ENCODE measurements at regions of chr3 and their contacts with region 1.

Region 1: GRCh38 chr3:152268555-152269425 is at the start of gene MBNL1:
- DNase-seq: peak; percentile 91
- H3K4me3 ChIP-seq: peak within 1 kb of the TSS; percentile 78 to 86 (median 82)
- H3K27ac ChIP-seq: peak within 1 kb of the TSS; percentile 98 to 99 (median 99)
- H3K4me1 ChIP-seq: peaks cover 0 to 58% (median 44%) of the 10 kb centered on the region in 4 donors
- H3K27me3 ChIP-seq: no peaks in the 10 kb centered on the region
- CTCF ChIP-seq: no peak
- EP300 ChIP-seq: no peak
- POLR2A ChIP-seq: peak; percentile 32 to 55
- total RNA-seq, gene MBNL1: 602 to 898 (median 756) TPM

Region 2: DNA sequence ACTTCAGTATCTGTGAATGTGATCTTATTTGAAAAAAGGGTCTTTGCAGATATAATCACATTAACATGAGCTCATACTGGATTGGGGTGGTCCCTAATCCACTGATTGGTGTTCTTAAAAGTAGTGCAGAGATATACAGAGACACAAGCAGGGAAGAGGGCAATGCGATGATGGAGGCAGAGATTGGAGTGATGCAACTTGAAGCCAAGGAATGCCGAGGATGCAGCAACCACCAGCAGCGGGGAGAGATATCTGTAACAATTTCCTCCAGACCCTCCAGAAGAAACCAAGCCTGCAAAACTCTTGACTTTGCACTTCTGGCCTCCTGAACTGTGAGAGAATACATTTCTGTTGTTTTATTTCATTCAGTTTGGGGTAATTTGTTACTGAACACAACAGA is 171.0 kb before region 1 on chr3:
- intact Hi-C with region 1: loop called (anchors 2 kb)
- DNase-seq: peak; percentile 58
- H3K4me3 ChIP-seq: no peak overlapping the region
- H3K27ac ChIP-seq: peak overlapping the region; percentile 53 to 87 (median 79)
- H3K4me1 ChIP-seq: peaks cover 0 to 38% (median 24%) of the 10 kb centered on the region in 4 donors
- H3K27me3 ChIP-seq: no peaks in the 10 kb centered on the region
- CTCF ChIP-seq: no peak
- EP300 ChIP-seq: no peak
- POLR2A ChIP-seq: no peak

Region 3: GRCh38 chr3:152159328-152159727 is 109.5 kb before region 1 on chr3:
- intact Hi-C with region 1: loop called (anchors 2 kb)
- DNase-seq: no peak
- H3K4me3 ChIP-seq: no peak overlapping the region
- H3K27ac ChIP-seq: peak overlapping the region in 3 of 4 donors; percentile 54 to 79 (median 69)
- H3K4me1 ChIP-seq: peaks cover 0 to 60% (median 31%) of the 10 kb centered on the region in 4 donors
- H3K27me3 ChIP-seq: no peaks in the 10 kb centered on the region
- CTCF ChIP-seq: no peak
- EP300 ChIP-seq: peak in 1 of 4 donors; percentile 57
- POLR2A ChIP-seq: no peak

Region 4: GRCh38 chr3:152205097-152205593 is 63.6 kb before region 1 on chr3:
- intact Hi-C with region 1: loop called (anchors 2 kb)
- DNase-seq: no peak
- H3K4me3 ChIP-seq: peak overlapping the region; percentile 19 to 47 (median 34)
- H3K27ac ChIP-seq: peak overlapping the region; percentile 81 to 89 (median 84)
- H3K4me1 ChIP-seq: peaks cover 0 to 66% (median 35%) of the 10 kb centered on the region in 4 donors
- H3K27me3 ChIP-seq: no peaks in the 10 kb centered on the region
- CTCF ChIP-seq: no peak
- EP300 ChIP-seq: no peak
- POLR2A ChIP-seq: no peak

Region 5: DNA sequence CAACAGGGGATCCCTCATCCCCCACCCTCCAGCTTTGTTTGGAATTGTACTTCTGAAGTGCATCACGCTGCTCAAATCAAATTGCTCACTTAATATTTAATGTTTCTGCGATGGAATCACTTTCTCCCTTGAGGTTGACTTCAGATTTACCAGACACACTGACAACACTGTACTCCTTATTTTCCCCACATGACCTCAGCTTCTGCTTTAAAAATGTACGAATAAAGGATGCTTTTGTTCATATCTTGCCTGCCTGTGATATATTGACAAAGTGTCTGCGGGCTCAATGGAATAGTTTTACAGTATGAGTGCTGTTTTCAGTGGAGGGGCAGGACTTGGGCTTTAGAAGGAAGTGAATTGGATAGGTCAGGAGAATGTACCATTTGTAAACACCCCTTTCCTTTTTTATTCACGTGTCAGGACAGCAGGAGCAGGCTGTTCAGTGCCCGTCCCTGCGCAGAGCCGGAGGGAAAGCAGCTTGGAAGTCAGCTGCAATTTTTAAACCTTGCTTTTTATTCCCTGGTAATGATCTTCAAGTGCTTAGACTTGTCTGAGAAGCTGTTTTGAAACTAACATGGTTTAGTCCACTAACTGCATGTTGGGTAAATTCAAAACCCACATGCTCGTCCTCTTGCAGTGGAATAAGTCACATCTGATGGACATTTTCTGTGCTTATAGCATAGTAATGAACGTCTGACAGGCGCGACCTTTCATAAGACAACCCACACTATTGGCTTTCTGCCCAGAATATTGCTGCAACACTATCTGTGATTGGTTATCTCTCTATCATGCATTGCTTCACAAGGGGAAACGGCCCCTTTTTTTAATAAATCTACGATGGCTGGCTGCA is 29.8 kb after region 1 on chr3:
- intact Hi-C with region 1: loop called (anchors 2 kb)
- DNase-seq: peak; percentile 86
- H3K4me3 ChIP-seq: peak overlapping the region; percentile 28 to 49 (median 43)
- H3K27ac ChIP-seq: peak overlapping the region; percentile 82 to 90 (median 84)
- H3K4me1 ChIP-seq: peaks cover 0 to 95% (median 68%) of the 10 kb centered on the region in 4 donors
- H3K27me3 ChIP-seq: no peaks in the 10 kb centered on the region
- CTCF ChIP-seq: no peak
- EP300 ChIP-seq: no peak
- POLR2A ChIP-seq: peak; percentile 52 to 60

Region 6: DNA sequence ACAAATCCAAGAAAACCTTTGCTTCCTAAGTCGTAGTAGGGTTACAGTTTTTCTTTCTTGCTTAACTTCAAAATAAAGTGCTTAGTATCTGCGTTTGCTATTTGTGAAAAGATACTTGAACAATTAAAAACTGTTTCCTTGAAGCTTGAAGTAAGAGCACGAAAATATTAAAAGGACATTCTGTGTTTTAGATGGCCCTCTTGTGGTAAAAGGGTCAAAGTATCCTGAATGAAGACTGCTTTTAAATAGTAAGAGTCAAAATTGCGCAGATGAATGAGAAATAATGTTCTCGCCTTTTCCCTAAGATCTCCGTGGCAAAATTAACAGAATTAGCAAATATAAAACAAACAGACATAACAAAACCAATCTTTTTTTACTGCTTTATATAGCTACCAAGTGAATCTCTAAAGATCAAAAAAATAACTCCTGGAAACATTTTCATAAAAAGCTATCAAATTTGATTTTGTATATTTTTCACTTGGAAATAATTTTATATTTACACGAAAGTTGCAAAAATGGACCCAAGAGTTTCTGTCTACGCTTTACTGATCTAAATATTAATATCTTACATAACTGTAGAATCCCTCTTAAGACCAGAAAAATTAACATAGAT is 175.3 kb after region 1 on chr3:
- intact Hi-C with region 1: loop called (anchors 5 kb)
- DNase-seq: no peak
- H3K4me3 ChIP-seq: peak overlapping the region in 1 of 4 donors; percentile 5
- H3K27ac ChIP-seq: peak overlapping the region; percentile 23 to 68 (median 40)
- H3K4me1 ChIP-seq: peaks cover 0 to 81% (median 65%) of the 10 kb centered on the region in 4 donors
- H3K27me3 ChIP-seq: no peaks in the 10 kb centered on the region
- CTCF ChIP-seq: peak; percentile 51 to 67 (median 61)
- EP300 ChIP-seq: no peak
- POLR2A ChIP-seq: no peak

Measured in sigmoid colon (tissue), 7 donors.